Activated CD4-positive, alpha-beta memory T cell treated with anti-CD3 and anti-CD28 coated beads for 36 hours (primary cell): ENCODE measurements at regions of chr2 and their contacts with region 1.

Region 1: GRCh38 chr2:108988796-108989713 is at the start of gene EDAR:
- DNase-seq: peak; percentile 65
- H3K4me3 Mint-ChIP-seq: peak within 1 kb of the TSS; percentile 65
- H3K27ac Mint-ChIP-seq: no peak within 1 kb of the TSS
- H3K4me1 Mint-ChIP-seq: peaks cover 34% of the 10 kb centered on the region
- H3K27me3 Mint-ChIP-seq: peaks cover 2% of the 10 kb centered on the region
- total RNA-seq, gene EDAR: 0.31 to 0.36 TPM

Region 2: GRCh38 chr2:108594132-108594981 is 394.7 kb before region 1 on chr2:
- CTCF ChIA-PET with region 1: no interaction called
- POLR2A ChIA-PET with region 1: no interaction called
- intact Hi-C with region 1: loop called (anchors 10 kb)
- DNase-seq: no peak
- H3K4me3 Mint-ChIP-seq: peak overlapping the region; percentile 38
- H3K27ac Mint-ChIP-seq: peak overlapping the region; percentile 73
- H3K4me1 Mint-ChIP-seq: peaks cover 48% of the 10 kb centered on the region
- H3K27me3 Mint-ChIP-seq: no peaks in the 10 kb centered on the region

Region 3: GRCh38 chr2:108786354-108787199 is 202.5 kb before region 1 on chr2 and contains the start of gene CCDC138:
- CTCF ChIA-PET with region 1: no interaction called
- POLR2A ChIA-PET with region 1: no interaction called
- intact Hi-C with region 1: loop called (anchors 1 kb)
- DNase-seq: peak; percentile 94
- H3K4me3 Mint-ChIP-seq: peak within 1 kb of the TSS; percentile 91
- H3K27ac Mint-ChIP-seq: peak within 1 kb of the TSS; percentile 81
- H3K4me1 Mint-ChIP-seq: peaks cover 13% of the 10 kb centered on the region
- H3K27me3 Mint-ChIP-seq: no peaks in the 10 kb centered on the region
- total RNA-seq, gene CCDC138: 9.1 to 9.5 TPM

Region 4: GRCh38 chr2:108855194-108855593 is 133.9 kb before region 1 on chr2:
- CTCF ChIA-PET with region 1: interaction called, 4 read pairs
- POLR2A ChIA-PET with region 1: no interaction called
- intact Hi-C with region 1: loop called (anchors 10 kb)
- DNase-seq: no peak
- H3K4me3 Mint-ChIP-seq: no peak overlapping the region
- H3K27ac Mint-ChIP-seq: no peak overlapping the region
- H3K4me1 Mint-ChIP-seq: no peaks in the 10 kb centered on the region
- H3K27me3 Mint-ChIP-seq: no peaks in the 10 kb centered on the region

Region 5: DNA sequence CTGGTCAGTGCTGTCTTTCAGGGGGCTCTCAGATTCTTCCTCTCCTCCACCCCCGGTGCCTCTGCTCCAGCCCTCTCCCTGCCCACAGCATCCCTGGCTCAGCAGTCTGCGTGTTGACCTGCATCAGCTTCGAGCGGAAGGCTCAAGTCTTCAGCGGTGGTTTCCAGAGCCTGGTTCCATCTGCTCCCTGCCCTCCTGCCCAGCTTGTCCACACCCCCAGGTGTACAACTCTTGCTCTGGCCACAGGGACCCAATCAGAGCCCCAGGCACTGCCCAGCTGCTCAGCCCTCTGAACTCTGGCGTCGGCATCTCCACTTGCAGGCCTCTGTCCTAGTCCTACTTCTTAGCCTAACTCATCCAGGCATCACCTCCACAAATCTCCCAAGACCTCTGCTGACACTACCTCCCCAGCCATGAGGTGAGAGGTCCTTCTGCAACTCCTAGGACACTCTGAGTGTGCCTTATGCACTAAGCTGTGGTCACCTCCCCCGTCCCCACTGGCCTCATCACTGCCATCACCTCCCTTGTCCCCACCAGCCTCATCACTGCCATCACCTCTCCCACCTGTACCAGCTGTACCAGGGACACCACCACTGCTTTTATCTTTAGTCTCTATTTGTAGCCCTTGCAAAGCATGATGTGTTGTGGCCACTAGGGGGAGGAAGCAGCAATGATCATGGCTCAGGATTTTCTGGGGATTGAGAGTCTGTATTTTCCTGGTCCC is 61.0 kb before region 1 on chr2:
- CTCF ChIA-PET with region 1: interaction called, 24 read pairs
- POLR2A ChIA-PET with region 1: no interaction called
- intact Hi-C with region 1: loop called (anchors 1 kb)
- DNase-seq: peak; percentile 49
- H3K4me3 Mint-ChIP-seq: no peak overlapping the region
- H3K27ac Mint-ChIP-seq: no peak overlapping the region
- H3K4me1 Mint-ChIP-seq: peaks cover 4% of the 10 kb centered on the region
- H3K27me3 Mint-ChIP-seq: no peaks in the 10 kb centered on the region